ENCODE measurements at regions of chr10 and their contacts with region 1.

Region 1: GRCh38 chr10:59240582-59241183 is 64.2 kb downstream of the PHYHIPL start:
- DNase-seq: no peak
- H3K4me3 ChIP-seq: no peak overlapping the region
- H3K27ac ChIP-seq: no peak overlapping the region
- H3K4me1 ChIP-seq: peaks cover 4% of the 10 kb centered on the region
- H3K27me3 ChIP-seq: no peaks in the 10 kb centered on the region
- CTCF ChIP-seq: peak; percentile 76

Region 2: GRCh38 chr10:59465088-59465487 is 224.4 kb after region 1 on chr10:
- intact Hi-C with region 1: loop called (anchors 5 kb)
- DNase-seq: no peak
- H3K4me3 ChIP-seq: no peak overlapping the region
- H3K27ac ChIP-seq: no peak overlapping the region
- H3K4me1 ChIP-seq: no peaks in the 10 kb centered on the region
- H3K27me3 ChIP-seq: no peaks in the 10 kb centered on the region
- CTCF ChIP-seq: peak; percentile 56

Region 3: DNA sequence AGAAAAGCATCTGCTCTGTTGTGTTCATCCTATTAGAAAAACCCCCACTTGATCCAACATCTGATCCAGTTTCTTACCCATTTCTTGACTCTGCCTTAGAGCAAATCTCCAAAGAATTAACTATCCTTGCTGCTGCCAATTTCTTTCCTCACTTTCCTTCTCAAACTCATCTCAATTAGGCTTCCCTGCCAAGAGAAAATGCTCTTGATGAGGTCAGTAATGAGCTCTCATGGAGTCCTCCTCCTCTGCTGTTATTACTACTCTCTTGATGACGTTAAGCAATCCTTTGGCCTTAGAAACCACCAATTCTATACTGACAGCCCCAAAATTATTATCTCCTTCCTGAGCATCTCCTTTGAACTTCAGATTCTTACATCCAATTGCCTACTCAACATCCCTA is 283.7 kb after region 1 on chr10:
- intact Hi-C with region 1: no loop called
- DNase-seq: no peak
- H3K4me3 ChIP-seq: no peak overlapping the region
- H3K27ac ChIP-seq: peak overlapping the region; percentile 60
- H3K4me1 ChIP-seq: no peaks in the 10 kb centered on the region
- H3K27me3 ChIP-seq: no peaks in the 10 kb centered on the region
- CTCF ChIP-seq: no peak

Region 4: DNA sequence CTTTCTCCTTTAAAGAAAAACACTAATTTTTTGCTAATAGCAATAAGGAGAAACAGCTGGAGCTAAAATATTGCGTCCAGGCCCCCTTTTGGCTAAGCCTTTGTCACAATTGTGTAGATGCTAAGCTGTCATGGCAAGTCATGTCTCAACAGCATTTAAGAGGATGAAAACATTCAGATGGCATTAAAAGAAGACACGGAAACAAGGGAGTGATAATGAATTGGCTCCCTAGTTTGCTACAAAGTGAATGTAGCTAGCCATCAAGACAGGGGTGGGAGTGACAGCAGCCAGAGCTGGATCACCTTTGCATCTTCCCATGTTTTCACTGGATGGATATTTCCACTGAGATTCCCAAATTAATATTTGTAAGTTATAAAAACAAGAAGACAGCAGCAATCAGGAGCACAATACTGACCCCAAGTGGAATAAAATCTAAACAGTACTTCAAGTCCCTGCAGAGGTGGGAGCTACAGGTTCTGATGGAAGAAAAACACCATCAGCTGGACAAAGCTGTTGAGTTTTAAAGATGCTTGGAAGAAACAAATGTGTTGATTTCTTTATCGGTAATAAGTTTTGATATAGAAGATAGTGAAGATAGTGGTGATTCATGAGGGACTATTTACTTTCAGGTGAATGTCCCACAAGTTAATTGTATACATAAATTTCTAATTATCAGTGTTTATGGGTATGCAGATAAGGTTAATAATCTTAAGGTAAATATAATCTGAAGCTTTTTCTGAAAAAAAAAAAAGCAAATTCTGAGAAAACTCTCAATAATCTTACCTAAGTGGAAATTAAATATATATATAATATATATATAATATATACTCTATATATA is 339.6 kb after region 1 on chr10:
- intact Hi-C with region 1: loop called (anchors 10 kb)
- DNase-seq: no peak
- H3K4me3 ChIP-seq: no peak overlapping the region
- H3K27ac ChIP-seq: peak overlapping the region; percentile 50
- H3K4me1 ChIP-seq: peaks cover 5% of the 10 kb centered on the region
- H3K27me3 ChIP-seq: no peaks in the 10 kb centered on the region
- CTCF ChIP-seq: peak; percentile 65